K562 (cell line): ENCODE measurements at regions of chr13 and their contacts with region 1.

Region 1: DNA sequence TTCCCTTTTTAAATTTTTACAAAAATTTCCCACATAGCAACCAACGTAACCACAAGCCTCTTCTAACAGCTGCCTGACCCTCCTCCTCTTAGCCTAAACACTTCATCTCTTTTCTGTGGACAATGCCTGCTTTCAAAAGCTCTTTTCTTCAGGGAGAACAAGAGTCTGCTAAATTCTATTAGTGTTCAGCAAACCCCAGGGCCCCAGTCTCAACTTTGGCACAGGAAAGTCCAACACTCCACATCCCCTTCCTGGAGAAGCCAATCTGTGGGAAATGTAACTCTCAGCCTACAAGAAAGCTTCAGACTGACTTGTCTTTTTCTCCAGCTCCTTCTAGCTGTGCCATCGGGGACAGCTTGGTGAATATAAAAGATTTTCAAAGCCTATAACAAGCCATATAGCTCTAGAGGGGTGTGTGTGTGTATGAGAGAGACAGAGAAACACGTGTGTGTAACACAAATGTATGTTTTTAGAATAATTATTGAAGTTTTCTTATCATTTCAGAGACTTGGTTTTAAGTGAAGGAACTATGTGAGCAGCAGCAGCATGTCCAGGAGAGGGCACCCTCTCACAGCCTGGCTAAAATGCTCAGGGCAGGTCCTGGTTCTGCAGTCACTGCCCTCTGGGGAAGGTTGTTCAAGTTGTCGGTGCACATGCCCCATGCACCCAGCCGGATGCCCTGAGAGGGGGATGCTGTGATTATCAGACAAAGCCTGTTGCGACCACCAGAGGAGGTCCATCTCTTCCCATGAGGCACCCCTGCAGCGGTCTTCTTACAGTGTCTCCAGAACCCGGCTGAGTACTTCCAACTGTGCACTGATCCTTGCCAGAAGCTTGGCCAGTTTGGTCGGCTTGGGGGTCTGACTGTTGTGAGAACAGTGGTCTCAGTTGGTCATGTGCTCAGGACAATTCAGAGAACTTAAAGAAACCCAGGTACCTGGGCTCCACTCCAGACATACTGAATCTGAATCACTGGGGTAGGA is 34.4 kb downstream of the CCDC70 start:
- DNase-seq: peak; percentile 48 to 68 (median 55)
- ATAC-seq: peak; percentile 98
- H3K4me3 ChIP-seq: no peak overlapping the region
- H3K27ac ChIP-seq: no peak overlapping the region
- H3K4me1 ChIP-seq: no peaks in the 10 kb centered on the region; a peak in 2 of 5 replicates
- H3K27me3 ChIP-seq: no peaks in the 10 kb centered on the region
- CTCF ChIP-seq: peak; percentile 77 to 88 (median 78)
- EP300 ChIP-seq: no peak
- POLR2A ChIP-seq: no peak
- RAD21 ChIP-seq: peak; percentile 85 to 87

Region 2: DNA sequence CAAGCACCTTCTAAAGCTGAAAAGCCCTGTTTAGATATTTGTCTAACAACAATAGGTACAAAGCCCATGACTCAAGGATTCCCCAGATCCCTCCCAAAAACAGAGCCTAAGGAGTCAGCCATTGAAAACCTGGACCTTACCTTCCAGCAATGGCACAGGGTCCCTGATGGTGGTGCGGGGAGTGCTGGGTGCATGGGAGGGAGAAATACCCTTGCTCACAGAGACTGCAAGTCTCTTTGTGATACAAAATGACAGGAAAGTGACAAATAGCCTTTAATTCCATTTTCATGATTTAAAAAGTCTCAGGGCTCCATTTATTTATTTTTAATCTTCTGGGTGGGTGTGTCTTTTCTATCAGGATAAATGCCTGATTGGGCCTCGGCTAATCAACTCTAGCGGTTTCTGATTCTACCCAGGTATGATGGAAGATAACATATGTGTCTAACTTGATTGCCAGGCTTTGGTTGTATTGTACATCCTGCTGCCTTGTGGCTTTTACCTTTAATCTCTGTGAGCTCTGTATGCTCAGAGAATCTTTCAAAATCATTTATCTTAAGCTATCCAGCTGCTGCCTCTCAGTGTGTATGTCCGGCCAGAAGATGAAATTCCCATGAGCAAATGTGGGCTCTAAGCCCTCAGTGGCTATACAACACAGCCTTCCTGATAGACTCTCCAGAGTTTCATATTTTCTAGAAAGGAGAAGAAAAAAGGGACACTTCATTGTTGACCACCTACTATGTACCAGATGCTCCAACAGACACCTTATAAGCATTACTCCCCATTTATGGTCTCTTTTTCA is 728.6 kb before region 1 on chr13:
- CTCF ChIA-PET with region 1: no interaction called
- POLR2A ChIA-PET with region 1: no interaction called
- in situ Hi-C with region 1: no loop called
- intact Hi-C with region 1: no loop called
- DNase-seq: no peak
- ATAC-seq: no peak
- H3K4me3 ChIP-seq: no peak overlapping the region
- H3K27ac ChIP-seq: no peak overlapping the region
- H3K4me1 ChIP-seq: no peaks in the 10 kb centered on the region
- H3K27me3 ChIP-seq: peaks cover 0 to 4% of the 10 kb centered on the region in 2 experiments; a peak in 1 of 5 replicates
- CTCF ChIP-seq: no peak
- EP300 ChIP-seq: no peak
- POLR2A ChIP-seq: no peak
- RAD21 ChIP-seq: no peak

Region 3: GRCh38 chr13:51832471-51833152 is 63.6 kb before region 1 on chr13:
- CTCF ChIA-PET with region 1: no interaction called
- POLR2A ChIA-PET with region 1: no interaction called
- in situ Hi-C with region 1: no loop called
- intact Hi-C with region 1: no loop called
- DNase-seq: peak in 1 of 4 experiments; percentile 28
- ATAC-seq: peak; percentile 70
- H3K4me3 ChIP-seq: no peak overlapping the region
- H3K27ac ChIP-seq: no peak overlapping the region
- H3K4me1 ChIP-seq: no peaks in the 10 kb centered on the region; a peak in 1 of 5 replicates
- H3K27me3 ChIP-seq: peaks cover 2 to 25% of the 10 kb centered on the region in 2 experiments; a peak in 3 of 5 replicates
- CTCF ChIP-seq: peak; percentile 36 to 42 (median 38); a peak in 4 of 6 replicates
- EP300 ChIP-seq: no peak
- POLR2A ChIP-seq: no peak
- RAD21 ChIP-seq: peak; percentile 28 to 43; a peak in 3 of 4 replicates

Region 4: GRCh38 chr13:51921790-51922740 is 25.9 kb after region 1 on chr13:
- CTCF ChIA-PET with region 1: interaction called, 3 read pairs
- POLR2A ChIA-PET with region 1: interaction called, 3 read pairs
- in situ Hi-C with region 1: no loop called
- intact Hi-C with region 1: loop called (anchors 1 kb)
- DNase-seq: peak; percentile 66 to 89 (median 69)
- ATAC-seq: peak; percentile 86
- H3K4me3 ChIP-seq: no peak overlapping the region
- H3K27ac ChIP-seq: peak overlapping the region; percentile 70
- H3K4me1 ChIP-seq: peaks cover 58 to 63% of the 10 kb centered on the region in 2 experiments
- H3K27me3 ChIP-seq: no peaks in the 10 kb centered on the region
- CTCF ChIP-seq: no peak
- EP300 ChIP-seq: peak; percentile 93
- POLR2A ChIP-seq: no peak
- RAD21 ChIP-seq: no peak

Region 5: GRCh38 chr13:52001120-52001731 is 105.0 kb after region 1 on chr13:
- CTCF ChIA-PET with region 1: no interaction called
- POLR2A ChIA-PET with region 1: no interaction called
- in situ Hi-C with region 1: no loop called
- intact Hi-C with region 1: loop called (anchors 5 kb)
- DNase-seq: peak; percentile 32 to 49 (median 42)
- ATAC-seq: peak; percentile 45
- H3K4me3 ChIP-seq: no peak overlapping the region
- H3K27ac ChIP-seq: no peak overlapping the region
- H3K4me1 ChIP-seq: peaks cover 31 to 43% of the 10 kb centered on the region in 2 experiments
- H3K27me3 ChIP-seq: no peaks in the 10 kb centered on the region
- CTCF ChIP-seq: peak; percentile 36 to 67 (median 53); a peak in 4 of 6 replicates
- EP300 ChIP-seq: no peak
- POLR2A ChIP-seq: no peak
- RAD21 ChIP-seq: peak; percentile 49 to 73